Caco-2 (cell line): ENCODE measurements at regions of chr14 and their contacts with region 1.

Region 1: DNA sequence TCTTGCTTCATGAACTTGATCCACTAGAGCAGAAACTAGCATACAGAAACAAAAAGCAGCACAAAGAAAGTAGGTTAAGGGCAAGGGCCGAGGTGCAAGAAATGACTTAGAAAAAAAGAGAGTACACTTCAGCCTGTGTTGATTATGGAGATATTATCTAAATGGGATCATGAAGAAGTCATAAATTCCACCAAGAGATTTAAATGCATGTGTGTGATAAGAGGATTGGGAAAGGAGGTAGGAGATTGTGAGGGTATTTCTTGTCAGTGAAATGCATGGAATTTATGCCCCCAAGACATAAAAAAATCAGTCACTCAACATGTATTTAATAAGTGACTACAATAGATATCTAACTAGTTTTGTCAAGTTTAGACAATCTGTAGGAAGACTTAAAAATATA is 976.2 kb upstream of the LRFN5 start:
- DNase-seq: peak; percentile 36 to 38
- H3K4me3 ChIP-seq: no peak overlapping the region
- H3K4me3 Mint-ChIP-seq: no peak overlapping the region
- H3K27ac Mint-ChIP-seq: peak overlapping the region; percentile 36
- H3K4me1 ChIP-seq: peaks cover 25% of the 10 kb centered on the region
- H3K4me1 Mint-ChIP-seq: peaks cover 19% of the 10 kb centered on the region
- H3K27me3 ChIP-seq: no peaks in the 10 kb centered on the region
- H3K27me3 Mint-ChIP-seq: no peaks in the 10 kb centered on the region
- CTCF ChIP-seq: no peak

Region 2: GRCh38 chr14:40682133-40682913 is 51.9 kb after region 1 on chr14:
- CTCF ChIA-PET with region 1: no interaction called
- POLR2A ChIA-PET with region 1: no interaction called
- intact Hi-C with region 1: no loop called
- DNase-seq: no peak
- H3K4me3 ChIP-seq: no peak overlapping the region
- H3K4me3 Mint-ChIP-seq: no peak overlapping the region
- H3K27ac Mint-ChIP-seq: no peak overlapping the region
- H3K4me1 ChIP-seq: peaks cover 7% of the 10 kb centered on the region; the same call in 1 of the 2 replicates
- H3K4me1 Mint-ChIP-seq: no peaks in the 10 kb centered on the region
- H3K27me3 ChIP-seq: no peaks in the 10 kb centered on the region
- H3K27me3 Mint-ChIP-seq: no peaks in the 10 kb centered on the region
- CTCF ChIP-seq: no peak

Region 3: DNA sequence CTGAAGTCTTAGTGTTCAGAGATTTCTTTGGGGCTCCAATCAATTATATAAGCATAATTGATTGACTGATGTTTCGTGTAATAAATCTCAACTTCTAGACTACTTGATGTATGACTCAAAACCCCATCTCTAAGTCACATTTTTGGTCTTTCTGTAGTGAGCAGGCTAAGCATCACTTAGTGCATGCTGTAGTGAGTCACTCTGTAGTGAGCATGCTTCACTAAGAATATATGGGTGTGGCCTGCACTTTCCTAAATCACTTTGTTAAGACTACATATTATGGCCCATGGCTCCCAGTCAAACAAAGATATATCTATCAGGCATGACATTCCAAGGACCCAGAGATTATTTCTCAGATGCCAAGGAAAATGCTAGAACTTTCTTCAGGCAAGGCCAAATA is 66.8 kb after region 1 on chr14:
- CTCF ChIA-PET with region 1: no interaction called
- POLR2A ChIA-PET with region 1: no interaction called
- intact Hi-C with region 1: loop called (anchors 5 kb)
- DNase-seq: no peak
- H3K4me3 ChIP-seq: no peak overlapping the region
- H3K4me3 Mint-ChIP-seq: no peak overlapping the region
- H3K27ac Mint-ChIP-seq: no peak overlapping the region
- H3K4me1 ChIP-seq: no peaks in the 10 kb centered on the region
- H3K4me1 Mint-ChIP-seq: no peaks in the 10 kb centered on the region
- H3K27me3 ChIP-seq: no peaks in the 10 kb centered on the region
- H3K27me3 Mint-ChIP-seq: no peaks in the 10 kb centered on the region
- CTCF ChIP-seq: no peak

Region 4: GRCh38 chr14:40757376-40757950 is 127.0 kb after region 1 on chr14:
- CTCF ChIA-PET with region 1: no interaction called
- POLR2A ChIA-PET with region 1: no interaction called
- intact Hi-C with region 1: loop called (anchors 1 kb)
- DNase-seq: peak; percentile 38 to 65
- H3K4me3 ChIP-seq: no peak overlapping the region
- H3K4me3 Mint-ChIP-seq: peak overlapping the region; percentile 38
- H3K27ac Mint-ChIP-seq: peak overlapping the region; percentile 92
- H3K4me1 ChIP-seq: peaks cover 40% of the 10 kb centered on the region
- H3K4me1 Mint-ChIP-seq: peaks cover 30% of the 10 kb centered on the region
- H3K27me3 ChIP-seq: no peaks in the 10 kb centered on the region
- H3K27me3 Mint-ChIP-seq: no peaks in the 10 kb centered on the region
- CTCF ChIP-seq: no peak

Region 5: DNA sequence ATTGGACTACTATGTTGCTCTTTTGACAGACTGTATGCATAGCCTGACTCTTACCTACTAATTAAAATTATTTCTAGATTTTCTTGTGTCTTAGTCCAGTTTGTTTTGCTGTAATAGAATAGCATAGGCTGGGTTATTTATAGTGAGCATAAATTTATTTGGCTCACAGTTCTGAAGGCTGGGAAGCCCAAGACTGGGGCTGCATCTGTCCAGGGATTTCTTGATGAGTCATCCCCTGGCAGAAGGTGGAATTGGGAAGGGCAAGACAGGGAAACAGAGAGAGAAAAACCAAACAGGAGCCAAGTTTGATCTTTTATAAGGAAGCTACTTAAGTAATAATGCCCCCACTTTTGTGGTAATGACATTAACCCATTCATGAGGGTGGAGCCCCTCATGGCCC is 217.0 kb after region 1 on chr14:
- CTCF ChIA-PET with region 1: no interaction called
- POLR2A ChIA-PET with region 1: no interaction called
- intact Hi-C with region 1: loop called (anchors 10 kb)
- DNase-seq: no peak
- H3K4me3 ChIP-seq: no peak overlapping the region
- H3K4me3 Mint-ChIP-seq: no peak overlapping the region
- H3K27ac Mint-ChIP-seq: peak overlapping the region; percentile 29
- H3K4me1 ChIP-seq: peaks cover 14% of the 10 kb centered on the region
- H3K4me1 Mint-ChIP-seq: peaks cover 14% of the 10 kb centered on the region
- H3K27me3 ChIP-seq: no peaks in the 10 kb centered on the region
- H3K27me3 Mint-ChIP-seq: no peaks in the 10 kb centered on the region
- CTCF ChIP-seq: no peak